OCI-LY7 (cell line): ENCODE measurements at regions of chrX and their contacts with region 1.

Region 1: GRCh38 chrX:13151828-13152510 is 107.5 kb upstream of the FAM9C start:
- DNase-seq: no peak
- H3K4me3 ChIP-seq: no peak overlapping the region
- H3K27ac ChIP-seq: no peak overlapping the region
- H3K4me1 ChIP-seq: no peaks in the 10 kb centered on the region
- CTCF ChIP-seq: no peak

Region 2: GRCh38 chrX:13115146-13115855 is 36.7 kb before region 1 on chrX:
- CTCF ChIA-PET with region 1: interaction called, 14 read pairs
- POLR2A ChIA-PET with region 1: no interaction called
- intact Hi-C with region 1: no loop called
- DNase-seq: no peak
- H3K4me3 ChIP-seq: no peak overlapping the region
- H3K27ac ChIP-seq: no peak overlapping the region
- H3K4me1 ChIP-seq: no peaks in the 10 kb centered on the region
- CTCF ChIP-seq: no peak

Region 3: DNA sequence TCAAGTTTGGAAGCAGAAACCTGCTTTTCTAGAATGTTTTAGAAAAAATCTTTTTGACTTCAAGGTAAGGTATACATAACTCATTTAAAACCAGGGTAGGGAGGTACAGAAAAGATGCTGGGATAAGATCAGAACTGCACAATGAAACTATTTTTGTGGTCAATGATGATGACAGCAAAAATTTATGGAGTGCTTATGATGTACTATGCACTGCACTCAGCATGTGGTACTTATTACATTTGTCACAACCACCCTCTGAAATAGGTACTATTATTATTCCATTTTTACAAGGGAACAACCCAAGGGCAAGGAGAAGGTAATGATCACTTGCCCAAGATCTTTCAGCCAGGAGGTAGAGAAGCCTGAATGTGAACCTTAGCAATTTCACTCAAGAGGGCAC is 656.9 kb after region 1 on chrX:
- CTCF ChIA-PET with region 1: no interaction called
- POLR2A ChIA-PET with region 1: no interaction called
- intact Hi-C with region 1: no loop called
- DNase-seq: no peak
- H3K4me3 ChIP-seq: no peak overlapping the region
- H3K27ac ChIP-seq: no peak overlapping the region
- H3K4me1 ChIP-seq: peaks cover 4% of the 10 kb centered on the region
- CTCF ChIP-seq: no peak